CD8-positive, alpha-beta memory T cell (primary cell): ENCODE measurements at regions of chr7 and their contacts with region 1.

Region 1: GRCh38 chr7:74567318-74567668 is 90.2 kb upstream of the GTF2I start:
- DNase-seq: no peak
- H3K4me3 ChIP-seq: no peak overlapping the region
- H3K4me3 Mint-ChIP-seq: no peak overlapping the region
- H3K27ac ChIP-seq: no peak overlapping the region
- H3K27ac Mint-ChIP-seq: no peak overlapping the region
- H3K4me1 ChIP-seq: no peaks in the 10 kb centered on the region
- H3K4me1 Mint-ChIP-seq: peaks cover 0 to 5% (median 0%) of the 10 kb centered on the region in 3 donors
- H3K27me3 ChIP-seq: no peaks in the 10 kb centered on the region
- H3K27me3 Mint-ChIP-seq: peaks cover 3 to 4% of the 10 kb centered on the region in 2 donors

Region 2: GRCh38 chr7:74417419-74417971 is 149.8 kb before region 1 on chr7:
- CTCF ChIA-PET with region 1: interaction called, 18 read pairs
- POLR2A ChIA-PET with region 1: no interaction called
- DNase-seq: peak; percentile 26 to 61 (median 36)
- H3K4me3 ChIP-seq: no peak overlapping the region
- H3K4me3 Mint-ChIP-seq: no peak overlapping the region
- H3K27ac ChIP-seq: no peak overlapping the region
- H3K27ac Mint-ChIP-seq: no peak overlapping the region
- H3K4me1 ChIP-seq: no peaks in the 10 kb centered on the region
- H3K4me1 Mint-ChIP-seq: no peaks in the 10 kb centered on the region
- H3K27me3 ChIP-seq: no peaks in the 10 kb centered on the region
- H3K27me3 Mint-ChIP-seq: no peaks in the 10 kb centered on the region

Region 3: GRCh38 chr7:74449809-74450397 is 117.4 kb before region 1 on chr7:
- CTCF ChIA-PET with region 1: interaction called, 10 read pairs
- POLR2A ChIA-PET with region 1: no interaction called
- DNase-seq: peak; percentile 44 to 72 (median 50)
- H3K4me3 ChIP-seq: no peak overlapping the region
- H3K4me3 Mint-ChIP-seq: peak overlapping the region in 1 of 7 donors; percentile 28
- H3K27ac ChIP-seq: no peak overlapping the region
- H3K27ac Mint-ChIP-seq: peak overlapping the region in 1 of 8 donors; percentile 66
- H3K4me1 ChIP-seq: peaks cover 12% of the 10 kb centered on the region
- H3K4me1 Mint-ChIP-seq: peaks cover 12 to 24% (median 19%) of the 10 kb centered on the region in 3 donors
- H3K27me3 ChIP-seq: no peaks in the 10 kb centered on the region
- H3K27me3 Mint-ChIP-seq: peaks cover 7 to 14% of the 10 kb centered on the region in 2 donors

Region 4: DNA sequence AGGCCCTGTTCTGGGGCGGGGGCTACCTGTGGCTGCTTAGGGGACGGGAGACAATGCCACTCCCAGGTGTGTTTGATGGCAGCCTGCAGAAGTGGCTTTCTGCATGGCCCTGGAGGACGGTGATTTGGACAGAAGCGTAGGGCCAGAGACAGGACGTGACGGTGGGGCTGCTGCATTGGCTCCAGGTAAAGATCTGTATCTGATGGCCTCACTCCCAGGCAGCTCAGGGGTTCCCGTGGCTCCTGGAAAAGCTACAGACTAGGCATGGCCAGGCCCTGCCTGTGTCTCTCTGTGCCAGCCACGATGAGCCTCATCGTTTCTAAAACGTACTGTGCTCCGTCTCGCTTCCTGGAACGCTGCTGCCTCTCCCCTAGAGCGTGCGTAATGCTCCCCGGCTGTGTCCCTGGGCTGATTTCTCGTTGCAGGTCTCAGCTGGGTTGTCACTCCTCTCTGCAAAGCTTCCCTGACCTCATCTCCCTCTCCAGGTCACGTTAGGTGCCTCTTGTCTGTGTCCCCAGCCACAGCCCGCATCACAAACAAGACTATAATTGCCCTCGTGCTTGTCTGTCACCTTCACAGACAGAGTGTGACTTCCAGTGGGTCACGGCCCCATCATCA is 101.0 kb before region 1 on chr7:
- CTCF ChIA-PET with region 1: no interaction called
- POLR2A ChIA-PET with region 1: no interaction called
- DNase-seq: no peak
- H3K4me3 ChIP-seq: no peak overlapping the region
- H3K4me3 Mint-ChIP-seq: no peak overlapping the region
- H3K27ac ChIP-seq: no peak overlapping the region
- H3K27ac Mint-ChIP-seq: no peak overlapping the region
- H3K4me1 ChIP-seq: no peaks in the 10 kb centered on the region
- H3K4me1 Mint-ChIP-seq: peaks cover 0 to 5% (median 5%) of the 10 kb centered on the region in 3 donors
- H3K27me3 ChIP-seq: no peaks in the 10 kb centered on the region
- H3K27me3 Mint-ChIP-seq: peaks cover 0 to 3% of the 10 kb centered on the region in 2 donors